ENCODE measurements at regions of chr9 and their contacts with region 1.

Region 1: DNA sequence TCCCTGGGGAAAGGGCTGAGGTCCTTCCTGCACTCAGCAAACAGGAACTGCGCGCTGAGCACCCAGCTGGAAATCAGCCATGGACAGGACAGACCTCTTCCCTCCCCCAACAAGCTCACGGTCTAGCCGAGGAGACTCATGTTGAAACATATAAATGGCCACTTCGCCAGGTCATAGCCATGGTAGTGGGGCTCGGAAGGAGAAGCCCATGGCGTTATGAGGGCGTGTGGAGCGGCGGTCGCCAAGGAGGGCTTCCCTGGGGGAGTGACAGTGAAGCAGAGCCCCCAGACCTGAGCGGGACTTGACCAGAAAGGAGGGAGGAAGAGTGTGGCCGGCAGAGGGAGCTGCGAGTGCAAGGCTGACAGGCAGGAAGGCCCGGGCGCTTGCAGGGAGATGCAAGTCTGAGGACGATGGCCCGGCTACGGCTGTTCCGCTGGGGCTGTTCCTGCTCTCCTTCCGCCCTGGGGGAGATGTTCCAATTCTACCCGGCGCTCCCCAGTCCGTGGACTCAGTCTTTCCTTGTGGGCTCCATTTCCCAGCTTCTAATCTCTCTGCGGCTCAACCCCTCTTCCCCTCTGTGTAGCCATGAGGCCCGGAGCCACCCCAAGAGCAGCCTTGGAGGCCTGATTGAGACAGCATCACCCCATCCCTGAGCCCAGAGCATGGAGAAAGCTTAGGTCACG is 43.9 kb upstream of the PRRC2B start:
- DNase-seq: peak; percentile 74 to 77 (median 77)
- H3K4me3 ChIP-seq: peak overlapping the region in 2 of 3 experiments; percentile 25 to 73
- H3K4me3 Mint-ChIP-seq: peak overlapping the region; percentile 80 to 93
- H3K27ac ChIP-seq: no peak overlapping the region
- H3K27ac Mint-ChIP-seq: peak overlapping the region; percentile 40 to 88 (median 63)
- H3K4me1 ChIP-seq: peaks cover 11% of the 10 kb centered on the region in 2 donors
- H3K4me1 Mint-ChIP-seq: peaks cover 16% of the 10 kb centered on the region
- H3K27me3 ChIP-seq: no peaks in the 10 kb centered on the region
- H3K27me3 Mint-ChIP-seq: peaks cover 0 to 2% (median 1%) of the 10 kb centered on the region in 3 donors
- CTCF ChIP-seq: peak; percentile 82

Region 2: DNA sequence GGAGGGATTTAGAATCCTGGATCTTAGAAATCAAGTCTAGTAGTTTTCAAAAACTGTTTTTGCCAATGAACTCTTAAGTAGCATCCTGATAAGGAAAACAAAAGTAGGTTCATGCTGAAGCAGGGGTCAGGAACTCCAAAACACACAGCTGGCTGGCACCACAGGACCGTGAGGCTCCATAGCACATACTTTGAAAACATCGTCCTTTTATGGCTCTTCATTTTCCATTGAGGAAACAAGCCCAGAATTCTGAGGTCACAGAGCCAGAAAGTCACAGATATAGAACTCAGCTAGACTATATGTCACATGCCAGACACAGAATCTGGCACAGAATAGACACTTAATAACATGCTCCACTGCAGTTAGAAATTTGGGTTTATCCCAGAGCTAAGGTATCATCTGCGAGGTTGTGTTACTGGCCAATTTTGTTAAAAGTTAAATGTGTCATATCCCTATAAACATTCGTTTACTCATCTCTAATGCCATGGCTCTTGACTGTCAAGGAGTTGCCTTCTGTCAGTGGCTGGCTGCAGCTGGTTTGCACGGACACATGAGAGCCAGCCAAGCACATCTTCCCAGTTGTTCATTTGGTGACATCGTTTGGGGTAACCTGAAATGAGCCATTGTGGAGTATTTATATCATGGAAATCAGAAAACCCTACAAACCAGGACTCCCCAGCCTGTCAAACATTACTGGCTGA is 132.5 kb before region 1 on chr9:
- intact Hi-C with region 1: no loop called
- DNase-seq: no peak
- H3K4me3 ChIP-seq: no peak overlapping the region
- H3K4me3 Mint-ChIP-seq: no peak overlapping the region
- H3K27ac ChIP-seq: no peak overlapping the region
- H3K27ac Mint-ChIP-seq: peak overlapping the region in 1 of 7 donors; percentile 20
- H3K4me1 ChIP-seq: no peaks in the 10 kb centered on the region
- H3K4me1 Mint-ChIP-seq: peaks cover 6% of the 10 kb centered on the region
- H3K27me3 ChIP-seq: no peaks in the 10 kb centered on the region
- H3K27me3 Mint-ChIP-seq: peaks cover 0 to 3% (median 0%) of the 10 kb centered on the region in 3 donors
- CTCF ChIP-seq: no peak

Region 3: DNA sequence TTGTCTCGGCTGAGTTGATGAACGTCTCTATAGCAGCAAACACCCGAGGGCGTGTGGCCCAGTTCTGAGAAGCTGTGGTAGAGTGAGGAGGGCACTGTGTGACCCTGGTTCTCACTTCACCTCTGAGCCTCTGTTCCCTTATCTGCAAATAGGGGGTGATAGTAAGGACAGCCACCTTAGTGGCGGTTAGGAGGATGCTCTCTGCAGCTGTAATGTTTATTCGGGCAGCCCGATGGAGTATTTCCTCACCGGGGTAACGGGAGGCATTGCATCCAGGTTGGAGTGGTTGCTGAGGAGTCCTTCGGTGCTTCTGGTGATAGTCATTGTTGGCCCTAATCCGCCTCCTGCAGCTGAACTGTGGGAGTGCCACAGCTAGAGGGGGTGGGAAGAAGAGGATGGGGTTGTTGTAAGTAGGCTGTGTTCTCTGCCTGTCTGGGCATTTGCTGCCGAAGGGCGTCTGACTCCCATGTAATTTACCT is 57.7 kb after region 1 on chr9:
- intact Hi-C with region 1: loop called in 1 of 2 experiments (anchors 5 kb)
- DNase-seq: no peak
- H3K4me3 ChIP-seq: no peak overlapping the region
- H3K4me3 Mint-ChIP-seq: no peak overlapping the region
- H3K27ac ChIP-seq: peak overlapping the region in 1 of 2 donors; percentile 73
- H3K27ac Mint-ChIP-seq: peak overlapping the region in 5 of 7 donors; percentile 16 to 85 (median 30)
- H3K4me1 ChIP-seq: peaks cover 52 to 72% of the 10 kb centered on the region in 2 donors
- H3K4me1 Mint-ChIP-seq: peaks cover 77% of the 10 kb centered on the region
- H3K27me3 ChIP-seq: no peaks in the 10 kb centered on the region
- H3K27me3 Mint-ChIP-seq: peaks cover 0 to 3% (median 0%) of the 10 kb centered on the region in 3 donors
- CTCF ChIP-seq: peak; percentile 16

Region 4: GRCh38 chr9:131478421-131478868 is 128.4 kb after region 1 on chr9:
- intact Hi-C with region 1: loop called in 1 of 2 experiments (anchors 5 kb)
- DNase-seq: peak in 2 of 3 donors; percentile 3 to 17
- H3K4me3 ChIP-seq: no peak overlapping the region
- H3K4me3 Mint-ChIP-seq: no peak overlapping the region
- H3K27ac ChIP-seq: no peak overlapping the region
- H3K27ac Mint-ChIP-seq: peak overlapping the region in 2 of 7 donors; percentile 25 to 57
- H3K4me1 ChIP-seq: no peaks in the 10 kb centered on the region
- H3K4me1 Mint-ChIP-seq: no peaks in the 10 kb centered on the region
- H3K27me3 ChIP-seq: no peaks in the 10 kb centered on the region
- H3K27me3 Mint-ChIP-seq: peaks cover 0 to 1% (median 0%) of the 10 kb centered on the region in 3 donors
- CTCF ChIP-seq: peak; percentile 56

Measured in CD14-positive monocyte (primary cell).